Activated CD4-positive, alpha-beta T cell treated with anti-CD3 and anti-CD28 coated beads, Interleukin-2, amount 10 ng/mL, durations not matched to agents 24 days and 14 days (primary cell): ENCODE measurements at regions of chr2 and their contacts with region 1.

Region 1: GRCh38 chr2:190718652-190719526 is 70.0 kb downstream of the NAB1 start:
- DNase-seq: peak; percentile 73
- H3K4me3 Mint-ChIP-seq: peak overlapping the region; percentile 64
- H3K27ac Mint-ChIP-seq: peak overlapping the region; percentile 96
- H3K4me1 Mint-ChIP-seq: peaks cover 53% of the 10 kb centered on the region
- H3K27me3 Mint-ChIP-seq: no peaks in the 10 kb centered on the region

Region 2: GRCh38 chr2:190319555-190320498 is 399.1 kb before region 1 on chr2 and contains the start of gene HIBCH:
- intact Hi-C with region 1: loop called (anchors 1 kb)
- DNase-seq: peak; percentile 96
- H3K4me3 Mint-ChIP-seq: peak within 1 kb of the TSS; percentile 95
- H3K27ac Mint-ChIP-seq: peak within 1 kb of the TSS; percentile 94
- H3K4me1 Mint-ChIP-seq: peaks cover 35% of the 10 kb centered on the region
- H3K27me3 Mint-ChIP-seq: peaks cover 2% of the 10 kb centered on the region
- total RNA-seq, gene HIBCH: 26.7 and 29.1 TPM in 2 replicates

Region 3: GRCh38 chr2:190534310-190535120 is 184.4 kb before region 1 on chr2 and contains the start of gene NEMP2:
- intact Hi-C with region 1: loop called (anchors 2 kb)
- DNase-seq: peak; percentile 95
- H3K4me3 Mint-ChIP-seq: peak within 1 kb of the TSS; percentile 93
- H3K27ac Mint-ChIP-seq: peak within 1 kb of the TSS; percentile 99
- H3K4me1 Mint-ChIP-seq: peaks cover 41% of the 10 kb centered on the region
- H3K27me3 Mint-ChIP-seq: no peaks in the 10 kb centered on the region
- total RNA-seq, gene NEMP2: 16.4 and 19.0 TPM in 2 replicates

Region 4: GRCh38 chr2:190584980-190585661 is 133.8 kb before region 1 on chr2:
- intact Hi-C with region 1: no loop called
- DNase-seq: no peak
- H3K4me3 Mint-ChIP-seq: no peak overlapping the region
- H3K27ac Mint-ChIP-seq: no peak overlapping the region
- H3K4me1 Mint-ChIP-seq: peaks cover 6% of the 10 kb centered on the region
- H3K27me3 Mint-ChIP-seq: no peaks in the 10 kb centered on the region

Region 5: DNA sequence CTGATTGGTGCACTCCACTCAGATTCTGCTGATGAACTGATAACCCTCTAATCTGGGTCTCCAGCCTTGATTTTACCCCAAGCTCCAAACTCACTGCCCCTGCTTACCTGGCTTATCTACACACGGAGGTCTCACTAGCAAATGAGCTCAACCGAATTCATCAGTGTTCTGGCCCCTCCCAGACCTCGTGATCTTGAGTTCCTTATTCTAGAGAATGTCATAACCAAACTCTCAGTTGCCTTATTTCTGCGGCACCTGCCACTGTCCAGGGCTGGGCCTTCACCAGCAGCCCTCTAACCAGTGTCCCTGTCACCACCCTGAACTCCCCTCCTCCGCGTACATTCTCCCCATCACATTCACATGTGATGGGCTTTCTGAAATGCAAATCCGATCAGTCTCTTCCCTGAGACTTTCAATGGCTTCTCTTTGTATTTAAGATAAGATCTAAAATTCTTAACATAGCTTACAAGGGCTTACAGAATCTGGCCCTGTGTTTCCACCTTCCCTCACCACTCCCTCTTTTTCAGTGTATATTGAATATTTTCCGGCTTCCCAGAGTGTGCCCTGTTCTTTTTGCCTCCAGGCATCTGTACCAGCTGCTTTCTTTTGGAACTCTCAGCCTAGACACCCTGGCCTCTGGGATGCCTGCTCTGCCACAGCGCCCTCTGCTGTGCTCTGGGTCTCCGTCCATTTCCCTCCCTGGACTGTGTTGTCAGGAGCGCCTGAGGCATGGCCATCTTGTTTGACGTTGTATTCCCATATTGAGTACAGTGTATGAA is 38.9 kb before region 1 on chr2:
- intact Hi-C with region 1: loop called (anchors 1 kb)
- DNase-seq: peak; percentile 86
- H3K4me3 Mint-ChIP-seq: peak overlapping the region; percentile 49
- H3K27ac Mint-ChIP-seq: peak overlapping the region; percentile 91
- H3K4me1 Mint-ChIP-seq: peaks cover 48% of the 10 kb centered on the region
- H3K27me3 Mint-ChIP-seq: no peaks in the 10 kb centered on the region

Region 6: DNA sequence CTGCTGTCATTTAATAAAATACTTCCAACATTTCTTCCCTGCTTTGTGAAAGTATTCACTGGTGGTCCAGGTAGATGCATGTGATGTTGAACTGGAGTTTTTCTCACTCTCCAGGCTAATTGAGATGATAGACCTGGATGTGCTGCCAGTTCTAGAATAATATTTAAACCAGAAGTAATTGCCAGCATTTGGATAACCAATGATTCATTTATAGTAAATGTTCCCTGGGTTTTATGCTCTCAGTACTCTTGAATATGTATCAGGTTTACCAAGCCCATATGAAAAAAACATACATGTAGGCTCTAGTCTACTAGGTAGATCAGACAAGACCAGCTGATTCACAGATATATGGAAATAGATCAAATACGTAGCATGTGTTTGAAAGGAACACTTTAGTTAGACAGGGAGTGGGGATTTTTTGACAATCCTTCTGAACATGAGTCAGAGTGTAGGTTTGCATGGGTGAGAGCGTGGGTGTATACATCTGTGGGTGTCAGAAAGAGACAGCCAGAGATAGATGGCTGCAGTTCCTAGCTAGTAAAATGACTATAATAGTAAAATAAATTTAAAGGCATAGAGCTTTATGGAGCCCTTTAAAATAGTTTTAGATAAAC is 45.1 kb after region 1 on chr2:
- intact Hi-C with region 1: loop called (anchors 1 kb)
- DNase-seq: peak; percentile 63
- H3K4me3 Mint-ChIP-seq: peak overlapping the region; percentile 42
- H3K27ac Mint-ChIP-seq: peak overlapping the region; percentile 29
- H3K4me1 Mint-ChIP-seq: peaks cover 41% of the 10 kb centered on the region
- H3K27me3 Mint-ChIP-seq: no peaks in the 10 kb centered on the region

Region 7: DNA sequence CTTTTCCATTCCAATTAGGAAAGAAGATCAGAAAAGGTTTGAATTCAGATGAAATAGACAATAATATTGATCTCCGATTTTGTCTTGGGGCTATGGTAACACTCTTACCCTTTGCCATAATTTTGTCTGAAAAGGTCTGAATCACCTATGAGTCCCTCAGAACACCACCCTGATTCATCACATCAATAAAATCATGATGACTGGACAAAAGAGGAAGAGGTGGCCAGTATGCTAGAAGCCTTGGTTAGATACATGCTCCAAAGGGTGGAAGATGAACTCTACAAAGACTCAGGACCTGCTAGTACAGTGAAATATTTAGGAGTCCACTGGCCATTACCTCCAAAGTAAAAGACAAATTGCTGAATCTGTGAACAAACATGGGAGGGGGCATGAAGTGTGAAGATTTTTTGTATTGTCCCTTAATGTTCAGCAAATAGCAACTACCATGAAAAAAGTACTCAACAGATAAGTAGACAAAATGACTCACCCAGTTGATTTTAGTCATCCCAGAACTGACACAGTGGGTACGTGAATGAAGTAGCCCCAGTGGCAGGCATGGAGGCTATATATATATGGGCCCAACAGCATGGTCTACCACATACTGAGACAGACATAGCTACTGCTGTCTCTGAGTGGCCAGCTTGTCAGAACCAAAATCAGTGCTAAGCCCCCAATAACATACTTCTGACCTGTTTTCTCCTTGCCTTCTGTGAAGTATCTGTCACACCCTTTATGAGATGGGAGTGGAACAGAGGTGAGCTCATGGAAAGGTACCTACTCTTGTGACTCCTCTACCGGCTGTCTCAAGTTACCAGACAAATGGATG is 125.2 kb after region 1 on chr2:
- intact Hi-C with region 1: loop called (anchors 1 kb)
- DNase-seq: peak; percentile 72
- H3K4me3 Mint-ChIP-seq: peak overlapping the region; percentile 60
- H3K27ac Mint-ChIP-seq: peak overlapping the region; percentile 87
- H3K4me1 Mint-ChIP-seq: peaks cover 25% of the 10 kb centered on the region
- H3K27me3 Mint-ChIP-seq: no peaks in the 10 kb centered on the region

Region 8: DNA sequence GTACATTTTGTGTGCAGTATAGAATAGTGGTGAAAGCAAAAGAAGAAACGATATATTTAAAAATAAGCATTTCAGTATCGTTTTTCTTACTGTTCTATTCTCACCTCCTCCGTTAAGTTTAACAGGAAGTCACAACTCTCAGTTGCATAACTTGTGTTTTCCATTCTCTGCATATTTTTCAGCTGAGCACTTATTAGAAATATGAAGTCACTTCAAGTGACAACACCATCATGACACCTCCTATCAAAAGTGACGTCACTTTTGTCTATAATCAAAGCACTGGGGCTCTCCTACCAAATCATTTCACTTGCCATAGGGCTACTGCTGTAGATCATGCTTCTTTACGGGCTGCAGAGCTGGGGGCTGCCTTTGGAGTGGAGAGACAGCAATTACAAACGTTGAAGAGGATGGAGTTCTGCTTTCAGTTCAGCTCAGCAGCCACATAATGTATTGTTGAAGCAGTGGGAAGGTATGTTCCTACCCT is 395.6 kb after region 1 on chr2:
- intact Hi-C with region 1: loop called (anchors 1 kb)
- DNase-seq: peak; percentile 82
- H3K4me3 Mint-ChIP-seq: peak overlapping the region; percentile 60
- H3K27ac Mint-ChIP-seq: peak overlapping the region; percentile 92
- H3K4me1 Mint-ChIP-seq: peaks cover 55% of the 10 kb centered on the region
- H3K27me3 Mint-ChIP-seq: no peaks in the 10 kb centered on the region